HepG2 (cell line): ENCODE measurements at regions of chr6 and their contacts with region 1.

Region 1: GRCh38 chr6:126339796-126340609 is at the start of gene CENPW:
- DNase-seq: peak; percentile 88
- ATAC-seq: peak; percentile 92
- H3K4me3 ChIP-seq: peak within 1 kb of the TSS; percentile 80 to 97 (median 96)
- H3K27ac ChIP-seq: peak within 1 kb of the TSS; percentile 68
- H3K4me1 ChIP-seq: peaks cover 26% of the 10 kb centered on the region
- H3K27me3 ChIP-seq: peaks cover 0 to 5% of the 10 kb centered on the region in 2 experiments; a peak in 1 of 5 replicates
- CTCF ChIP-seq: peak; percentile 30
- EP300 ChIP-seq: 0 out of 4 replicates have a peak, but pooled peaks of 1 of the 2 experiments have one; percentile 65
- POLR2A ChIP-seq: peak; percentile 77 to 85
- RAD21 ChIP-seq: peak; percentile 25; the same call in 1 of the 2 replicates
- total RNA-seq, gene CENPW: 94.7 and 133 TPM in 2 replicates

Region 2: DNA sequence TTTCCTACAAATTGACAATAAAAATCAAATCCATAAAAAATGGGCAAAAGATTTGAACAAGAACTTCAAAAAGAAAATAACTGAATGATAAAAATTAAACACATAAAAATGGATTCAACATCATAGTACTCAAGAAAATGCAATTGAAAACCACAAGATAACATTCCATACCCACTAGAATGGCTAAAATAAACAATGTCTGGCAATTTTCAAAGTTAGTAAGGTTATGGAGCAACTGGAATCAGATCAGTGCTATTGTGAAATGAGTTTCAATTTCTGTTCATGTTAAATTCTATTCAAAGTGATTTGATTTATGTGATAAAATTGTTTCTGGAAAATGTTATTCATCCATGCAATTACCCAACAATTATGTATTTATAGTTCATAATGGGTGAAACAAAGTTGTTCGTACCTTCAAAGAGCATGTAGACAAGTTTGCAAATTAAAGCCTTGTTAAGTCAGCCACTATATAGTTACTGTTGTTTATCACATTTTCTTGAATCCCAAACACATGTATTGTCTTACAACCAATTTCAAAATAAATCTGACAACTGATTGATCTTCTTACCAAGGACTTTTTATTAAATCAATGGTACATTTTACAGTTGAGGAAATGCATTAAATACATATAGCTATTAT is 151.6 kb before region 1 on chr6:
- CTCF ChIA-PET with region 1: no interaction called
- POLR2A ChIA-PET with region 1: no interaction called
- in situ Hi-C with region 1: no loop called
- intact Hi-C with region 1: loop called (anchors 5 kb)
- DNase-seq: peak; percentile 7
- ATAC-seq: no peak
- H3K4me3 ChIP-seq: no peak overlapping the region
- H3K27ac ChIP-seq: no peak overlapping the region
- H3K4me1 ChIP-seq: peaks cover under 1% of the 10 kb centered on the region
- H3K27me3 ChIP-seq: no peaks in the 10 kb centered on the region
- CTCF ChIP-seq: no peak
- EP300 ChIP-seq: no peak
- POLR2A ChIP-seq: no peak
- RAD21 ChIP-seq: no peak